ENCODE measurements at regions of chr10 and their contacts with region 1.

Region 1: GRCh38 chr10:103181244-103181643 is 11.8 kb downstream of the NT5C2 start:
- DNase-seq: peak in 1 of 5 donors; percentile 29
- ATAC-seq: peak; percentile 38 to 87 (median 70)
- H3K4me3 ChIP-seq: no peak overlapping the region
- H3K27ac ChIP-seq: peak overlapping the region in 6 of 12 donors; percentile 6 to 77 (median 32)
- H3K4me1 ChIP-seq: peaks cover 4 to 67% (median 51%) of the 10 kb centered on the region in 12 donors
- H3K27me3 ChIP-seq: no peaks in the 10 kb centered on the region
- CTCF ChIP-seq: no peak
- POLR2A ChIP-seq: no peak

Region 2: DNA sequence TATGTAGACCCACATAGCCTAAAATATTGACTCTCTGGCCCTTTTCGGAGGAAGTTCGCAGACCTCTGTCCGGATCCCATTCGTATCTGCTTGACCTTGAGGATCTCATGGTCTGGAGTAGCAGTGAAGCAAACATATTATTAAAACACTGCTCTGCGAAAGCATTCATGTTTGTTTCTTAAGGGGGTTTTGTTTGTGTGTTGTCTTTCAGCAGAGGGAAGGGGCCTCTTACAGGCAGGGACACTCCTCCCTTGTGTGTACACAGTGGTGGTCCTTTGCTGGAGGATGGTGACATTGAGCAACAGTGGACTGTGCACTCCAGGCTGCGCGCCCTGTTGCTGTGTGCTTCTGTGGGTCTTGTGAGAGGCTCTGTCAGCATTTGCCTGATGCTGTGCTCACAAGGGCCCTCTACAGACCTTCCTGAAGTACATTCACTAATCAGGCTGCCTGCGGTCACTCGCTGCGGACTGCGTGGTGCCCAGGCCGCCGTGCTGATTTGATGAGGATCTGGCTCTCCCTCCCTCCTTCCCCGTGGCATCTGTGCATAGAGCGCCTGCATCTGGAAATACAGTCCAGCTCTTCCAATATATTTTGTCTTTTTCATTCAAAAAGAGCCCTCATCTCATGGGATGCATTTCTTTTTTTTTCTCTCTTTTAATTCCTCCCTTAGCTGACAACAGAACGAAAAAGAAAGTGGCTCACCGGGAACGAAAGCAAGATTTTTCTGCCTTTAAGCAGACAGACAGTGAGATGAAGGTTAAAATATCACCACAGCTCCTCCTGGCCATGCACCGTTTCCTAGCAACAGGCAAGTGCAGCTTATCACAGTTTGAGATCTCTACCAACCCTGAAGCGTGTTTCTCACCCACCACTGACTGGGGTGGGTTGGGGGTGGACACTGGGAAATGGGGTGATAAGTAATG is 127.3 kb before region 1 on chr10:
- intact Hi-C with region 1: no loop called
- DNase-seq: peak; percentile 62 to 73 (median 65)
- ATAC-seq: peak; percentile 67 to 95 (median 88)
- H3K4me3 ChIP-seq: peak overlapping the region in 9 of 12 donors; percentile 18 to 52 (median 44)
- H3K27ac ChIP-seq: peak overlapping the region in 8 of 12 donors; percentile 0 to 53 (median 28)
- H3K4me1 ChIP-seq: peaks cover 0 to 42% (median 16%) of the 10 kb centered on the region in 12 donors
- H3K27me3 ChIP-seq: no peaks in the 10 kb centered on the region
- CTCF ChIP-seq: peak in 9 of 12 donors; percentile 16 to 56 (median 33)
- POLR2A ChIP-seq: no peak

Region 3: GRCh38 chr10:103153302-103154197 is 27.7 kb before region 1 on chr10:
- intact Hi-C with region 1: loop called in 1 of 10 experiments (anchors 1 kb)
- DNase-seq: peak in 1 of 5 donors; percentile 20
- ATAC-seq: peak in 2 of 4 donors; percentile 57 to 59
- H3K4me3 ChIP-seq: peak overlapping the region in 9 of 12 donors; percentile 16 to 46 (median 40)
- H3K27ac ChIP-seq: peak overlapping the region; percentile 64 to 87 (median 77)
- H3K4me1 ChIP-seq: peaks cover 0 to 67% (median 50%) of the 10 kb centered on the region in 12 donors
- H3K27me3 ChIP-seq: no peaks in the 10 kb centered on the region
- CTCF ChIP-seq: no peak
- POLR2A ChIP-seq: no peak

Region 4: GRCh38 chr10:103238506-103239252 is 57.4 kb after region 1 on chr10:
- intact Hi-C with region 1: loop called in 1 of 10 experiments (anchors 10 kb)
- DNase-seq: peak in 3 of 5 donors; percentile 35
- ATAC-seq: peak; percentile 55 to 90 (median 80)
- H3K4me3 ChIP-seq: no peak overlapping the region
- H3K27ac ChIP-seq: no peak overlapping the region
- H3K4me1 ChIP-seq: peaks cover 0 to 31% (median 7%) of the 10 kb centered on the region in 12 donors
- H3K27me3 ChIP-seq: no peaks in the 10 kb centered on the region
- CTCF ChIP-seq: peak in 10 of 12 donors; percentile 9 to 60 (median 34)
- POLR2A ChIP-seq: no peak